HCT116 (cell line): ENCODE measurements at regions of chr2 and their contacts with region 1.

Region 1: GRCh38 chr2:236180831-236181453 is 12.8 kb upstream of the GBX2 start:
- DNase-seq: peak; percentile 42
- ATAC-seq: peak; percentile 41
- H3K4me3 ChIP-seq: no peak overlapping the region
- H3K27ac ChIP-seq: no peak overlapping the region
- H3K4me1 ChIP-seq: peaks cover 2 to 38% of the 10 kb centered on the region in 2 experiments; a peak in 3 of 4 replicates
- H3K27me3 ChIP-seq: no peaks in the 10 kb centered on the region
- CTCF ChIP-seq: peak; percentile 62 to 81 (median 76)
- POLR2A ChIP-seq: no peak
- RAD21 ChIP-seq: peak; percentile 87

Region 2: GRCh38 chr2:235398316-235398715 is 782.6 kb before region 1 on chr2:
- CTCF ChIA-PET with region 1: no interaction called
- POLR2A ChIA-PET with region 1: no interaction called
- RAD21 ChIA-PET with region 1: no interaction called
- intact Hi-C with region 1: no loop called
- DNase-seq: no peak
- ATAC-seq: no peak
- H3K4me3 ChIP-seq: no peak overlapping the region
- H3K27ac ChIP-seq: no peak overlapping the region
- H3K4me1 ChIP-seq: peaks cover 26 to 31% of the 10 kb centered on the region in 2 experiments
- H3K27me3 ChIP-seq: no peaks in the 10 kb centered on the region
- CTCF ChIP-seq: no peak
- POLR2A ChIP-seq: no peak
- RAD21 ChIP-seq: no peak

Region 3: DNA sequence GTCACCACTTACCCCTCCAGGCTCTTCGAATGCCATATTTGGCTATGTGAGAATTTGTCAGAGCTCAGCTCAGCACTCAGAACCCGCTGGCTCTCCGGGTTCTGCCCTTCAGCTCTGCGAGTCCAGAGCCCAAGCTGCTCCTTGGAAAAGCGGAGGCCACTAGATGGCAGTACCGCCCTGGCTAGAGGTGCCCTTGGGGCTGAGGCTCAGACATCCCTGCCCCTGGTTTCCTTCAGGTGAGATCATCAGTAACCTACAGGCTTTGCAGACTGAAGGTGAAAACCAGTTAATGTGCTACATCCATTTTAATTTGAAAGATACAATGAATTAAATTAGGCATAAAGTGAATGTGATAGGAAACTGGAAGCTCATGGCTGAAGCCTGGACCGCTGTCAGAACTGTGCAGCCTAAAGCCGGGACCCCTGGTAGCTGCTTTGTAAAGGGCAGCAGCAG is 401.5 kb before region 1 on chr2:
- CTCF ChIA-PET with region 1: interaction called, 112 read pairs
- POLR2A ChIA-PET with region 1: interaction called, 3 read pairs
- RAD21 ChIA-PET with region 1: interaction called in 1 of 2 experiments, 4 read pairs
- intact Hi-C with region 1: loop called (anchors 1 kb)
- DNase-seq: peak; percentile 37
- ATAC-seq: peak; percentile 99
- H3K4me3 ChIP-seq: no peak overlapping the region
- H3K27ac ChIP-seq: no peak overlapping the region
- H3K4me1 ChIP-seq: no peaks in the 10 kb centered on the region
- H3K27me3 ChIP-seq: no peaks in the 10 kb centered on the region
- CTCF ChIP-seq: peak; percentile 82 to 91 (median 89)
- POLR2A ChIP-seq: no peak
- RAD21 ChIP-seq: peak; percentile 92

Region 4: DNA sequence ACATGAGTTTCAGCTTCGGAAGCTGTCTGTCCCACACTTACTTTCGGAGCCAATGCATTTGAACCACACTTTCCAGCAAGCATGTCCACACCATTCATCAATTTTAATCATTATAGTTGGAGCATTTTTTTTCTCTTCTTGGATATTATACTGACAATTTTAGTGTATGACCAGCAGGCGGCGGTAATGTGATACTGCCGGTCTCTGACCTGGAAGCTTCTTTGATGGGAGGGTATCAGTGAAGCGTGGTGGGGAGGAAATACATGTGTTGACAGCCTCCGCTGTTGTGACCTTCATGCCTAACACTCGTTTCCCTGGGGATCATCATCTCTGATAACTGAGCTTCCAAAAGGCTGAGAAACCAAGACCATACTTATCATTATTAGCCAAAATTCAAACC is 244.4 kb before region 1 on chr2:
- CTCF ChIA-PET with region 1: interaction called, 4 read pairs
- POLR2A ChIA-PET with region 1: no interaction called
- RAD21 ChIA-PET with region 1: no interaction called
- intact Hi-C with region 1: loop called (anchors 1 kb)
- DNase-seq: no peak
- ATAC-seq: no peak
- H3K4me3 ChIP-seq: no peak overlapping the region
- H3K27ac ChIP-seq: no peak overlapping the region
- H3K4me1 ChIP-seq: peaks cover 5 to 11% of the 10 kb centered on the region in 2 experiments; a peak in 2 of 4 replicates
- H3K27me3 ChIP-seq: no peaks in the 10 kb centered on the region
- CTCF ChIP-seq: peak; percentile 39 to 72 (median 40); a peak in 5 of 6 replicates
- POLR2A ChIP-seq: no peak
- RAD21 ChIP-seq: peak; percentile 47

Region 5: DNA sequence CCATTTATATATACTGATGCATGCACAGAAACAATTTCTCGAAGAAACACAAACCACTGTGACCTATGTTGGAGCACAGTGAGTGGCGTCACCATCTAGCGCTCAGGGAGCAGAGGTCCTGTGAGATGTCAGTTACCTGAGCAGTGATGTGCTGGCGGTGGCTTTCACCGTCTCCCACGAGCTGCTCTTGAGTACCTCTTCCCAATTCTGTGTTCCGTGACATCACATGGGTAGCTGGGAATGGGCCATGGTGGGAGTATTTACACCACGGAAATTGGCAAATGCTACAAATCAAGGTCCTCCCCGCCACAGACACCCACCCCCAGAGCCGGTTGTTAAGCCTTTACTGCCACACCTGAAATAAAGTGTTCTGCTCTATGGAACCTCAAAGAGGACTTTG is 37.1 kb before region 1 on chr2:
- CTCF ChIA-PET with region 1: interaction called, 18 read pairs
- POLR2A ChIA-PET with region 1: no interaction called
- RAD21 ChIA-PET with region 1: no interaction called
- intact Hi-C with region 1: loop called (anchors 2 kb)
- DNase-seq: no peak
- ATAC-seq: no peak
- H3K4me3 ChIP-seq: no peak overlapping the region
- H3K27ac ChIP-seq: no peak overlapping the region
- H3K4me1 ChIP-seq: peaks cover 5 to 8% of the 10 kb centered on the region in 2 experiments; a peak in 3 of 4 replicates
- H3K27me3 ChIP-seq: no peaks in the 10 kb centered on the region
- CTCF ChIP-seq: no peak
- POLR2A ChIP-seq: no peak
- RAD21 ChIP-seq: no peak

Region 6: GRCh38 chr2:236193051-236193450 is 12.1 kb after region 1 on chr2:
- CTCF ChIA-PET with region 1: interaction called, 14 read pairs
- POLR2A ChIA-PET with region 1: no interaction called
- RAD21 ChIA-PET with region 1: no interaction called
- intact Hi-C with region 1: no loop called
- DNase-seq: no peak
- ATAC-seq: peak; percentile 72
- H3K4me3 ChIP-seq: no peak overlapping the region
- H3K27ac ChIP-seq: no peak overlapping the region
- H3K4me1 ChIP-seq: no peaks in the 10 kb centered on the region
- H3K27me3 ChIP-seq: no peaks in the 10 kb centered on the region
- CTCF ChIP-seq: 0 out of 6 replicates have a peak, but pooled peaks of 1 of the 3 experiments have one; percentile 16
- POLR2A ChIP-seq: no peak
- RAD21 ChIP-seq: 0 out of 2 replicates have a peak, but pooled peaks have one; percentile 4